Activated CD4-positive, alpha-beta memory T cell treated with anti-CD3 and anti-CD28 coated beads for 36 hours (primary cell): ENCODE measurements at regions of chr3 and their contacts with region 1.

Region 1: GRCh38 chr3:196684548-196685407 is 27.3 kb downstream of the CEP19 start:
- DNase-seq: peak; percentile 80
- H3K4me3 Mint-ChIP-seq: peak overlapping the region; percentile 48
- H3K27ac Mint-ChIP-seq: peak overlapping the region; percentile 31
- H3K4me1 Mint-ChIP-seq: peaks cover 13% of the 10 kb centered on the region
- H3K27me3 Mint-ChIP-seq: no peaks in the 10 kb centered on the region

Region 2: GRCh38 chr3:196537319-196537984 is 147.3 kb before region 1 on chr3:
- CTCF ChIA-PET with region 1: interaction called, 4 read pairs
- POLR2A ChIA-PET with region 1: interaction called, 3 read pairs
- intact Hi-C with region 1: loop called (anchors 2 kb)
- DNase-seq: peak; percentile 77
- H3K4me3 Mint-ChIP-seq: no peak overlapping the region
- H3K27ac Mint-ChIP-seq: no peak overlapping the region
- H3K4me1 Mint-ChIP-seq: peaks cover 2% of the 10 kb centered on the region
- H3K27me3 Mint-ChIP-seq: peaks cover 3% of the 10 kb centered on the region

Region 3: DNA sequence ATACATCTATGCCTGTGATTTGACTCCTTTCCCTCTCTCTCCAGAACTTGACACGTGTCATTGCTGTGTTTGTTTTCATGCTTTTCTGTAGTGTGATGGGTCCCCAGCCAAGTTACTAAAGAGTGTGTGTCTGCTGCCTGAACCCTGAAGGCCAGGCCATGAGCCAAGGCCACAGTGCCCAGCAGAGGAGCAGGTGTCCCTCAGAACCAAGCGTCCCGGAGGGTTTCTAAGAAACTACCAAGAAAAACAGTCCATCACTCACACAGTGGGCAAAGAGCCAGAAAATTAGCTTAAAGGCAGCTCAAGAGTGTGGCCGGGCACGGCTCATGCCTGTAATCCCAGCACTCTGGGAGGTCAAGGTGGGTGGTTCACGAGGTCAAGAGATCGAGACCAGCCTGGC is 81.1 kb before region 1 on chr3:
- CTCF ChIA-PET with region 1: interaction called, 294 read pairs
- POLR2A ChIA-PET with region 1: no interaction called
- intact Hi-C with region 1: no loop called
- DNase-seq: no peak
- H3K4me3 Mint-ChIP-seq: no peak overlapping the region
- H3K27ac Mint-ChIP-seq: no peak overlapping the region
- H3K4me1 Mint-ChIP-seq: peaks cover 7% of the 10 kb centered on the region
- H3K27me3 Mint-ChIP-seq: peaks cover 2% of the 10 kb centered on the region

Region 4: DNA sequence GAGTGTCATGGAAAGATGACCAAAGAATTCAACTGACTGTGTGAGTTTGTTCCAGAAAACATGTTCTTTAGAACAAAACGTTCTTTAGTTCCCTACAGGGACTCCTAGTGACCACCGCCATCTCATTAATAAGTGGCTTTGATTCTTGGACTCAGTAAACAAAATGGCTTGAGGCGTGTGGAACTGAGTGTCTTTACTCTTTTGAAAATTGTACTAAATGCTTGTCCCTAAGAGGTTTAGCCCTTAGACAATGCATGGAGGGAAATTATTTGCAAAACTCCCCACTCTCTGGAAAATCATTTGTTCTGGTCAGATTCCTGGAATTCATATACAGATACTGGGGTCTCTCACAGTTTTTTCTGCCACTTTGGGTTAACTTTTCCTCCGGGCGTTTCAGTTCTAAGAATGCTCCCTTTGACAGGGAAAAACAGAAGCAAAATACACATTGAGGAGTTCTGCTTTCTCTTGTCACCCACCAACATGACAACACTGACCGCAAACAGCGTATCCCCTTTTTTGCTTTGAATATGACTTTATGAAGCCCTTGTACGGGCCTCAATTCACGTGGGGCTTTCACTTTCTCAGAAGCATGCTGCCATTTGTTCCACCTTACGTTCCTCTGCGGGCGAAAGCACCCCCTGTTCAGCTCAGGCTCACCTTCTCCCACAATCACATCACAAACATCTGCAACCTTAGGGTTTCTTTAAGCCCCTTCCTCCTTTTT is 60.5 kb before region 1 on chr3:
- CTCF ChIA-PET with region 1: interaction called, 12 read pairs
- POLR2A ChIA-PET with region 1: no interaction called
- intact Hi-C with region 1: no loop called
- DNase-seq: peak; percentile 61
- H3K4me3 Mint-ChIP-seq: peak overlapping the region; percentile 22
- H3K27ac Mint-ChIP-seq: no peak overlapping the region
- H3K4me1 Mint-ChIP-seq: peaks cover 25% of the 10 kb centered on the region
- H3K27me3 Mint-ChIP-seq: no peaks in the 10 kb centered on the region

Region 5: DNA sequence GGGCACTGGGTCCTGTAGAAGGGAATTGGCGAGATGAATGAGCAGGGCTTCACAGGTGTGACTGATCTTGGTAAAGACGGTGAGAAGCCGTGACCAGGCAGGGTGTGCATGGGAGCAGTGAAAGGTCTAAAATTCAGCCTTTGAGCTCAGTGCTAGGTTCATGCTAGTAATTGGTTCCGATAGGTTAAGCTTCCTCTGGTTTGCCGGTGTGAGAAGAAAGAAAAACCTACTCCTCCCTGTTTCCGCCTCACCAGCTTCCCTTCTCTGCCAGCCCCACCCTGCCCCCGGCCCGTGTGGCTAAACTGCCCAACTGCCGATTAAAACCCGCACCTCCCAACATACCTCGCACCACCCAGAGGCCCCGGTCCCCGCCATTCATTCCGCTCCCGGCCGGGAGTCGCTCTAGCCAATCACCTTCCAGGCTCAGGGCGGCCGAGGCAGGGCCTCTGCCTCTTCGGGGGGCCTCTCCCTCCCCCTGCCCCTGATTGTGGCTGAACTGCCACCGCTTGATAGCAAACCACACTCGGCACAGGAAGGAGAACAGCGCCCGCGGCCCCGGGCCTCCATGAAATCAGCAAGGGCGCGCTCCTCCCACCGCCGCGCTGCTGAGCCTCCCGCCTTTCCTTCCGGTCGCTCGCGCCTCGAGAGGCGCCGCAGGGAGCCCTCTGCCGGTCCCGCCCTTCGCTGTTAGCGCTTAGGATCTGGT is 52.6 kb before region 1 on chr3:
- CTCF ChIA-PET with region 1: interaction called, 12 read pairs
- POLR2A ChIA-PET with region 1: no interaction called
- intact Hi-C with region 1: no loop called
- DNase-seq: peak; percentile 92
- H3K4me3 Mint-ChIP-seq: peak overlapping the region; percentile 80
- H3K27ac Mint-ChIP-seq: peak overlapping the region; percentile 94
- H3K4me1 Mint-ChIP-seq: peaks cover 53% of the 10 kb centered on the region
- H3K27me3 Mint-ChIP-seq: no peaks in the 10 kb centered on the region

Region 6: DNA sequence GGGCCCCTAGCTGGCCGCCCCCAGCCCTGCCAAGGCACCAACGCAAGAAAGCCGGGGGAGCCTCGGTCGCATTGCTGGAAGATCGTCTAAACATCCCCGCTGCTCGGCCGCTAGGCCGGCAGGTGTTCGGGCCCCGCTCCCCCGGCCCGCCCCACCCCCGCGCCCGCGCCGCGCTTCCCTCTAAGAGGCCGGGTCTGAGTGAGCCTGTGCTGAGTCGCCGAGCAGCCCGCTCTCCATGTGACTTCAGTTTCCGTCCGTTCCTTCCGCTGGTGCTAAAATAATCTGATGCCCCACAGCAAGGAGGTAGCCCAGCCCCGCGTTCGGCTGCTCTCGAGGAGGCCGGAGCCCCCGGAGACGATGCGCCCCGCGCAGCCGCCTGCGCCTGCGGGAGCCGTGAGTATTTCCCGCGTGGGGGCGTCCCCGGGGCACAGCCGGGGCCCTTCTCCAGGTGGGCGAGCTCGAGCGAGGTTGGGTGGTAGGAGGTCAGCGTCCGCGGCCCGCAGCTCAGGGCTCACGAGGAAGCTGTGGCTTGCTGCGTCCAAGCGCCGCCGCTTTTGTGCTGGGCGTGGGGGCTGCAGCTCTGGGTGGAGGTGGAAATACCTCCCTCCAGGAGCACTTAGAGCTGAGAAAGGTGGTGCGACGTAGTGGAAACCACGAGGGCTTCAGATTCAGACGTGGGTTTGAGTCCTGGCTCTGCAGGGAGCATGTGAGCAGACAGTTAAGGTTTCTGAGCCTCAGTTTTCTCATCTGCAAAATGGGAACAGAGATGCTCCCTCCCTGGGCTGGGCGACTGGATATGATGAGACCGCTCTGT is 45.1 kb before region 1 on chr3 and contains the start of gene NRROS:
- CTCF ChIA-PET with region 1: interaction called, 20 read pairs
- POLR2A ChIA-PET with region 1: no interaction called
- intact Hi-C with region 1: loop called (anchors 1 kb)
- DNase-seq: peak; percentile 86
- H3K4me3 Mint-ChIP-seq: peak within 1 kb of the TSS; percentile 88
- H3K27ac Mint-ChIP-seq: peak within 1 kb of the TSS; percentile 94
- H3K4me1 Mint-ChIP-seq: peaks cover 64% of the 10 kb centered on the region
- H3K27me3 Mint-ChIP-seq: no peaks in the 10 kb centered on the region
- total RNA-seq, gene NRROS: 24.5 to 25.3 TPM

Region 7: GRCh38 chr3:196654735-196655090 is 30.1 kb before region 1 on chr3:
- CTCF ChIA-PET with region 1: interaction called, 11 read pairs
- POLR2A ChIA-PET with region 1: no interaction called
- intact Hi-C with region 1: no loop called
- DNase-seq: no peak
- H3K4me3 Mint-ChIP-seq: no peak overlapping the region
- H3K27ac Mint-ChIP-seq: no peak overlapping the region
- H3K4me1 Mint-ChIP-seq: peaks cover 26% of the 10 kb centered on the region
- H3K27me3 Mint-ChIP-seq: no peaks in the 10 kb centered on the region

Region 8: GRCh38 chr3:197711973-197712707 is 1027.4 kb after region 1 on chr3:
- CTCF ChIA-PET with region 1: no interaction called
- POLR2A ChIA-PET with region 1: no interaction called
- intact Hi-C with region 1: no loop called
- DNase-seq: peak; percentile 94
- H3K4me3 Mint-ChIP-seq: peak overlapping the region; percentile 62
- H3K27ac Mint-ChIP-seq: peak overlapping the region; percentile 86
- H3K4me1 Mint-ChIP-seq: peaks cover 35% of the 10 kb centered on the region
- H3K27me3 Mint-ChIP-seq: no peaks in the 10 kb centered on the region